ENCODE measurements at regions of chr4 and their contacts with region 1.

Region 1: DNA sequence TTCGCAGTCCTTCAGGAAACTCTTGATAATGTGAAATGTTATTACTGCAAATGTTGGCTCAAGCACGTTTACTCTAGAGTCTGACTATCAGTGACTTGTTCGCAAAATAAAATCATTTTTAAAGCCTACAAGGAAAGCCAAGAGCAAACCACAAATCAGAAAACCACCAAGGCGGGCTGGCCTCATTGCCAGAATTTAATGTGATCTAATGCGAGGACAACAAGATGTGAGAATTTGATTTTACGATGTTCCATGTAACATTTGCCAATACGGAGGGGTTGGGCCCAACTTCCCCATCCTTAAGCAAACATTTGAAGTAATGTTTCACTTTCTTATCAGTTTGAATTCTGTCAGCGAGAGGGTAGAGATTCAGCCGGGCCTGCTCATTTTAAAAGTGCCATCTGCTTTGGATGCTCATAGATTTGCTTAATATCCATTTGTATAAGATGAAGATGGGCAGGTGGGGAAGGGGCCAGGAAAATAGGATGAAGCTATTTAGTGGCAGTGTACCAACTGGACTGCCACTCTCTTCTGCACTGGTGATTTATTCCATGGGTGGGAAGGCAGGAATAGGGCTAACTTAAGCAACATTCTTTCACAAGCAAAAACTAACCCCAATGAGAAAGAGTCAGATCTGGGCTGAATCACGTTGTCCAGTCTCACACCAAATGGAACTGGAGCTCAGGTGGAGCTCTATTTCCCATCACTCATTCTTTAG is 225.3 kb downstream of the ANAPC10 start:
- DNase-seq: no peak
- H3K4me3 ChIP-seq: no peak overlapping the region
- H3K27ac ChIP-seq: no peak overlapping the region
- H3K4me1 ChIP-seq: no peaks in the 10 kb centered on the region
- H3K27me3 ChIP-seq: no peaks in the 10 kb centered on the region
- CTCF ChIP-seq: no peak

Region 2: DNA sequence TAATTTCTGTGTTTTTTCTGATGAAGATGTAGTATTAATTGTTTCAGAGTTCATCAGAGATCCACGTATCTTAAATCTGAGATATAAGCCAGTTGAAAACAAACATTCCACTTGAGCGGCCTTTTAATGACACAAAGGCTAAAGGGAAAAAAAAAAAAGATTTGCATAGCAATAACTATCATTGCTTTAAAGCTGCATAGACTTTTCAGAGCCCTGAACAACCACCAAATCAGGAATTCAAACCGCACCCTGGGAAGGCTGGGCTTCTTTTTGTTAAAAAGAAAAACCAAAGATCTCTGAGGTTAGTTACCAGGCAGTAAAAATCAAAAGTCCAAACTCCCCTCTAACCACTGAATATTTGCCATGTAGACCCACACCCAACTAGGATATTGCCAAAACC is 20.7 kb before region 1 on chr4:
- CTCF ChIA-PET with region 1: no interaction called
- POLR2A ChIA-PET with region 1: no interaction called
- intact Hi-C with region 1: loop called (anchors 2 kb)
- DNase-seq: no peak
- H3K4me3 ChIP-seq: no peak overlapping the region
- H3K27ac ChIP-seq: no peak overlapping the region
- H3K4me1 ChIP-seq: no peaks in the 10 kb centered on the region
- H3K27me3 ChIP-seq: no peaks in the 10 kb centered on the region
- CTCF ChIP-seq: no peak

Region 3: DNA sequence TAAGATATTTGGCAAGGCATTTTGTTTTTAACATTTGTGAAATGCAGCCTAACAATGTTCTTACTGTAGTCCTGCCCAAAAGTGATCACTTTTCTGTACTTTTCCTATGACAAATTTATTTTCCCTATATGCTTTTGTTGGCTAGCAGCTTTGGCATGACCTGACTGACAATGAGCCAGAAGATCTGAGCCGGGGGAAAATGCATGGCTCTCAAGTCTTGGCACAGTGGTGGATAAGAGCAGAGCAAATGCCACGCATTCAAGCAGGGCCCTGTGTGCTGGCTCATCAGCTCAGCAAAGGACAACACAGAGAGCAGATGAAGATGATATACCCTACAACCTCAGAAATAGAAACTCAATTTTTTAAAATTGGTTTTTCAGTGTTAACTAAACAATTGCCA is 38.1 kb after region 1 on chr4:
- CTCF ChIA-PET with region 1: no interaction called
- POLR2A ChIA-PET with region 1: no interaction called
- intact Hi-C with region 1: no loop called
- DNase-seq: no peak
- H3K4me3 ChIP-seq: no peak overlapping the region
- H3K27ac ChIP-seq: no peak overlapping the region
- H3K4me1 ChIP-seq: no peaks in the 10 kb centered on the region
- H3K27me3 ChIP-seq: no peaks in the 10 kb centered on the region
- CTCF ChIP-seq: no peak